B cell (primary cell): ENCODE measurements at regions of chr11 and their contacts with region 1.

Region 1: GRCh38 chr11:61332797-61333549 is at the starts of genes DDB1 and TKFC:
- DNase-seq: peak; percentile 91
- ATAC-seq: peak; percentile 93
- H3K4me3 ChIP-seq: peak within 1 kb of the TSS; percentile 75 to 97 (median 84)
- H3K4me3 Mint-ChIP-seq: peak within 1 kb of the TSS; percentile 98
- H3K27ac ChIP-seq: peak within 1 kb of the TSS; percentile 76 to 88
- H3K27ac Mint-ChIP-seq: peak within 1 kb of the TSS; percentile 97
- H3K4me1 ChIP-seq: peaks cover 30 to 35% of the 10 kb centered on the region in 2 donors
- H3K4me1 Mint-ChIP-seq: peaks cover 62% of the 10 kb centered on the region
- H3K27me3 ChIP-seq: no peaks in the 10 kb centered on the region
- H3K27me3 Mint-ChIP-seq: no peaks in the 10 kb centered on the region
- CTCF ChIP-seq: no peak
- total RNA-seq, gene DDB1: 155 and 167 TPM in 2 replicates
- total RNA-seq, gene TKFC: 68.2 and 86.3 TPM in 2 replicates

Region 2: GRCh38 chr11:61161190-61162091 is 171.5 kb before region 1 on chr11 and contains the start of gene VPS37C:
- CTCF ChIA-PET with region 1: no interaction called
- POLR2A ChIA-PET with region 1: no interaction called
- intact Hi-C with region 1: loop called (anchors 5 kb)
- DNase-seq: peak; percentile 98
- ATAC-seq: peak; percentile 75
- H3K4me3 ChIP-seq: peak within 1 kb of the TSS; percentile 32 to 68 (median 60)
- H3K4me3 Mint-ChIP-seq: peak within 1 kb of the TSS; percentile 91
- H3K27ac ChIP-seq: peak within 1 kb of the TSS; percentile 94 to 95
- H3K27ac Mint-ChIP-seq: peak within 1 kb of the TSS; percentile 96
- H3K4me1 ChIP-seq: peaks cover 42 to 50% of the 10 kb centered on the region in 2 donors
- H3K4me1 Mint-ChIP-seq: peaks cover 54% of the 10 kb centered on the region
- H3K27me3 ChIP-seq: no peaks in the 10 kb centered on the region
- H3K27me3 Mint-ChIP-seq: no peaks in the 10 kb centered on the region
- CTCF ChIP-seq: no peak
- total RNA-seq, gene VPS37C: 18.4 and 20.1 TPM in 2 replicates

Region 3: DNA sequence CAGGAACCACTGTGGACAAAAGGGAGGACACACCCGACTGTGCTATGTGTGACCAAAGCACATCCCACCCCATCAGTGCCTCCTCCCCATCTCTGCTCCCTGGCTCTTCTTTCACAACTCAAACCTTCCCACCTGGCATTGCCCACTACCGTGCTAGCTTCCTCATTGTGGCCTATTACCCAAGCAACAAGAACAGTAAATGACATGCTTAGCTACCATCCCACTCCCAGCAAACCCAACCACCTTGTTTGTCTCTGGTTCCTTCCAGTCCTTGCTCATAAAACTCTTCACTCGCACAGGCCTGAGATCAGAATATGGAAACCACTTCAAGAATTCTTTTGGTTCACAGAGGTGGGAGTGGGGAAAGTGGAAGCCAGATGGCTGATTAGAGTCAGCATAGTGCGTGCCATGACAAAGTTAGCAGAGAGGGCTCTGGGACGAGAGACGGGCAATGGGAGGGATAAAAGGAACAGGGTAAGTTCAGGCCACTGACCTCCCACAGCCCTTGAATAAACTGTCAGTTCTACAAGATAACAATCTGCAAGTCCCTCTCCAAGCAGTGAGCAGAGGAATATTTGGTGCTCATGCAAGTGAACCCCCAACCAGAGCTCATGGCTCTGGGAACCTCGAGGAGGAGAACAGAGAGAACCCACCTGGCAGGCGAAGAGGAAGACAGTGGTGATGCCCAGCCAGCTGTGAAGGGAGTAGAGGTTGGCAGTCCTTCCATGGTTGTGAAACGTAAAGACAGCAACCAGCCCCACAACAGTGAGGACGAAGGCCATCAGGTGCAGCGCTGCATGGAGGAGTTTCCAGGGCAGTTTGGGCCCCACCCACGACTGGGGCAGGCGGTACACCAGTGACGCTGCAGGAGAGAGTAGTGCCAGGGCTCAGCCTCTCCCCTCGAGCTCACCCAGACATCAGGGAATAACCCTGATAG is 20.4 kb after region 1 on chr11:
- CTCF ChIA-PET with region 1: interaction called, 436 read pairs
- POLR2A ChIA-PET with region 1: interaction called, 29 read pairs
- intact Hi-C with region 1: loop called (anchors 1 kb)
- DNase-seq: peak; percentile 52
- ATAC-seq: peak; percentile 7
- H3K4me3 ChIP-seq: peak overlapping the region; percentile 62 to 85 (median 73)
- H3K4me3 Mint-ChIP-seq: peak overlapping the region; percentile 95
- H3K27ac ChIP-seq: peak overlapping the region; percentile 93 to 95
- H3K27ac Mint-ChIP-seq: peak overlapping the region; percentile 99
- H3K4me1 ChIP-seq: peaks cover 48 to 72% of the 10 kb centered on the region in 2 donors
- H3K4me1 Mint-ChIP-seq: peaks cover 59% of the 10 kb centered on the region
- H3K27me3 ChIP-seq: no peaks in the 10 kb centered on the region
- H3K27me3 Mint-ChIP-seq: no peaks in the 10 kb centered on the region
- CTCF ChIP-seq: no peak

Region 4: DNA sequence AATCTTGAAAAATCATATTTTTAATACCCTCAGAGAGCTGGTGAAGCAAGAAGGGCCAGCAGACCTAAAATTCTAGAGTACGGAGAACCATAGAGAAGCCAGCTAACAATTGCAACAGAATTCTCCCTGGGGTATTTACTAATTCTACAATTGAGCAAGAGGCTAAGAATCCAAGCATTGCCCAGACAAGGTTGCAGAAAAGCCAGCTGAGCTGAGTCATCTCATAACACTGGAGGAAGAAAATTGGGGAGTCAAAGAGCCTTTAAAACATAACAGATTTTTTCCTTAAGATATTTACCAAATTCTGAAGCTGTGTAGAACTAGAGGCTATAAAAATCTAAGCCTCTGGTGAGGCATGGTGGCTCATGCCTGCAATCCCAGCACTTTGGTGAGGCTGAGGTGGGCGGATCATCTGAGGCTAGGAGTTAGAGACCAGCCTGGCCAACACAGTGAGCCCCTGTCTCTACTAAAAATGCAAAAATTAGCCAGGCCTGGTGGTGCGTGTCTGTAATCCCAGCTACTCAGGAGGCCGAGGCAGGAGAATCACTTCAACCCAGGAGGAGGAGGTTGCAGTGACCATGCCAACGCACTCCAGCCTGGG is 45.8 kb after region 1 on chr11:
- CTCF ChIA-PET with region 1: interaction called, 649 read pairs
- POLR2A ChIA-PET with region 1: interaction called, 30 read pairs
- intact Hi-C with region 1: no loop called
- DNase-seq: no peak
- ATAC-seq: no peak
- H3K4me3 ChIP-seq: no peak overlapping the region
- H3K4me3 Mint-ChIP-seq: no peak overlapping the region
- H3K27ac ChIP-seq: no peak overlapping the region
- H3K27ac Mint-ChIP-seq: no peak overlapping the region
- H3K4me1 ChIP-seq: no peaks in the 10 kb centered on the region
- H3K4me1 Mint-ChIP-seq: no peaks in the 10 kb centered on the region
- H3K27me3 ChIP-seq: no peaks in the 10 kb centered on the region
- H3K27me3 Mint-ChIP-seq: no peaks in the 10 kb centered on the region
- CTCF ChIP-seq: no peak

Region 5: DNA sequence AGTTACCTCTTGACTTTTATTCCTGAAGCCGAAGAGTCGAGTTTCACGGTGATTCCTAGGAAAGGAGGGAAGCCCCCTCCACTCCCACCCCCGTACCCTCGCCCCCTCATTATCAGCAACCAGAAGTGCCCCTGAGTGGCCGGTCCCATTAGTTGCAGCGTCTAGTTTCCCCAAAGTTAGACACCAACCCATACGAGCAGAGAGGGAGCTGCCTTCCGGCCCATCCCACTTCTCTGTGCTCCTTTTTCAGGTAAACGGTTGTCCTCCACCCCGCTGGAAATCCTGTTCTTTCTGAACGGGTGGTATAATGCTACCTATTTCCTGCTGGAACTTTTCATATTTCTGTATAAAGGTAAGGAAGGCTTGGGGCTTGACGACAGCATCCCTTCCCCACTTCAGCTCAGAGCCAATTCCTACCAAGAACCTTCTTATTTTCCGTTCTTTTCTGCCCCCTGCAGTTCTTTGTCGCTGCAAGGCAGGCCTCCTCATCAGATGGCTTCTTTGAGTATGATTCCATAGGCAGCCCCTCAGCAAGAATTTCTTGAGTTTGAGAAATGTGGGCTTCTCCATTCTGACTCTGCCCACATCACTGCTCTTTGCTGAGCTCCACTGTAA is 60.1 kb after region 1 on chr11:
- CTCF ChIA-PET with region 1: interaction called, 649 read pairs
- POLR2A ChIA-PET with region 1: interaction called, 22 read pairs
- intact Hi-C with region 1: loop called (anchors 2 kb)
- DNase-seq: peak; percentile 55
- ATAC-seq: peak; percentile 16
- H3K4me3 ChIP-seq: peak overlapping the region; percentile 63 to 96 (median 87)
- H3K4me3 Mint-ChIP-seq: peak overlapping the region; percentile 98
- H3K27ac ChIP-seq: peak overlapping the region; percentile 68 to 86
- H3K27ac Mint-ChIP-seq: peak overlapping the region; percentile 97
- H3K4me1 ChIP-seq: peaks cover 13 to 19% of the 10 kb centered on the region in 2 donors
- H3K4me1 Mint-ChIP-seq: peaks cover 22% of the 10 kb centered on the region
- H3K27me3 ChIP-seq: no peaks in the 10 kb centered on the region
- H3K27me3 Mint-ChIP-seq: no peaks in the 10 kb centered on the region
- CTCF ChIP-seq: no peak